ENCODE measurements at regions of chr15 and their contacts with region 1.

Region 1: DNA sequence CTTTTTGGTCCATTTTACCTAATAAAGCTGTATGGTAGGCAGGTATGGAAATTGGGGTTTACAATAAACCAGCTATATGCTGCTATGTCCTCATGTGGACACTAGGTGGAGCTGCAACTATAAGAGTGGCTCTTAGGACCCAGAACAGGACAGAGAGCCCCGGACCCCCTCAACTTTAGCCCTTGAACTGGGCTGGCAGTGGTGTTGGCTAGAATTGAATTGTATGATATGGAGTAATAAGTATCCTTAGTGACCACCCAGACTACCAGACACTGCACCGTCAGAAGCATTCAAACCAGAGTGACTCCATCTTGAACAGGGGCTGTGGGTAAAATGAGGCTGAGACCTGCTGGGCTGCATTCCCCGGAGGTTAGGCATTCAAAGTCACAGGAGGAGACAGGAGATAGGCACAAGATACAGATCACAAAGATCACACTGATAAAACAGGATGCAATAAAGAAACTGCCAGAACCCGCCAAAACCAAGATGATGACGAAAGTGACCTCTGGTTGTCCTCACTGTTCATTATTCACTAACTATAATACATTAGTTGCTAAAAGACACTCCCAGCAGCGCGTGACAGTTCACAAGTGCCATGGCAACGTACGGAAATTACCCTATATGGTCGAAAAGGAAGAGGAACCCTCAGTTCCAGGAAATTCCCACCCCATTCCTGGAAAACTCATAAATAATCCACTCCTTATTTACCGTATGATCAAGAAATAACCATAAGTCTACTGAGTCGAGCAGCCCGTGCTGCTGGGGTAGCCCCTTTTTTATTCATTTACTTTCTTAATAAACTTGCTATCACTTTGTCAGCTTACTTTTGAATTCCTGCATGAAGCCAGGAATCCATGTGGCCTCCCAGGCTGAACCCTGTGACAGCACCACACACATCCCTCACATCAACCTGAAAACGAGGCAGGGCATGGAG is 68.7 kb upstream of the BLM start:
- DNase-seq: peak; percentile 61
- H3K4me3 Mint-ChIP-seq: peak overlapping the region; percentile 42
- H3K27ac Mint-ChIP-seq: peak overlapping the region; percentile 82
- H3K4me1 Mint-ChIP-seq: peaks cover 9% of the 10 kb centered on the region
- H3K27me3 Mint-ChIP-seq: no peaks in the 10 kb centered on the region
- CTCF ChIP-seq: peak; percentile 90

Region 2: DNA sequence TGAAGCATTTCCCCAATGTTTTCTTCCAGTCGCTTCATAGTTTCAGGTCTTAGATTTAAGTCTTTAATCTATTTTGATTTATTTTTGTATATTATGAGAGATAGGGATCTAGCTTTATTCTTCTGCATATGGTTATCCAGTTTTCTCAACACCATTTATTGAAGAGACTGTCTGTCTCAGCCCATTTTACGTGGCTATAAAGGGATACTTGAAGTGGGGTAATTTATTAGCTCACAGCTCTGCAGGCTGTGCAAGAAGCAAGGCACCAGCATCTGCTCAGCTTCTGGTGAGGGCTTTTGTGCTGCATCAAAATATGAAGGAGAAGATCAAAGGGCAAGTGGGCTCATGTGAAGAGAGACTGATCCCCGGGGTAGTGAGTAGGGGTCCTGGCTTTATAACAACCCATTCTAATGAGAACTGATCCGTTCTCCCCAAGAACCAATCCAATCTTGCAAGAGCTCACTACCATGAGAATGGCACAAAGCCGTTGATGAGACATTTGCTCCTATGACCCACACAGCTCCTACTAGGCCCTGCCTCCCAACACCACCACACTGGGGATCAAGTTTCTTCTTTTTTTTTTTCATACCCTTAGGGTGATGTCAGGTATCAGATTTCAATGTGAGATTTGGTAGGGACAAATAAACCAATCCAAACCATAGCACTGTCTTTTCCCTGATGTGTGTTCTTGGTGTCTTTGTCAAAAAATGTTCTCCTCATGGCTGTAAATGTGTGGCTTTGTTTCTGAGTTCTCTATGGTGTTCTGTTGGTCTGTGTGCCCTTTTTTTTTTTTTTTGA is 197.2 kb before region 1 on chr15:
- CTCF ChIA-PET with region 1: no interaction called
- intact Hi-C with region 1: no loop called
- DNase-seq: peak; percentile 4
- H3K4me3 Mint-ChIP-seq: no peak overlapping the region
- H3K27ac Mint-ChIP-seq: no peak overlapping the region
- H3K4me1 Mint-ChIP-seq: peaks cover 13% of the 10 kb centered on the region
- H3K27me3 Mint-ChIP-seq: no peaks in the 10 kb centered on the region
- CTCF ChIP-seq: no peak

Region 3: DNA sequence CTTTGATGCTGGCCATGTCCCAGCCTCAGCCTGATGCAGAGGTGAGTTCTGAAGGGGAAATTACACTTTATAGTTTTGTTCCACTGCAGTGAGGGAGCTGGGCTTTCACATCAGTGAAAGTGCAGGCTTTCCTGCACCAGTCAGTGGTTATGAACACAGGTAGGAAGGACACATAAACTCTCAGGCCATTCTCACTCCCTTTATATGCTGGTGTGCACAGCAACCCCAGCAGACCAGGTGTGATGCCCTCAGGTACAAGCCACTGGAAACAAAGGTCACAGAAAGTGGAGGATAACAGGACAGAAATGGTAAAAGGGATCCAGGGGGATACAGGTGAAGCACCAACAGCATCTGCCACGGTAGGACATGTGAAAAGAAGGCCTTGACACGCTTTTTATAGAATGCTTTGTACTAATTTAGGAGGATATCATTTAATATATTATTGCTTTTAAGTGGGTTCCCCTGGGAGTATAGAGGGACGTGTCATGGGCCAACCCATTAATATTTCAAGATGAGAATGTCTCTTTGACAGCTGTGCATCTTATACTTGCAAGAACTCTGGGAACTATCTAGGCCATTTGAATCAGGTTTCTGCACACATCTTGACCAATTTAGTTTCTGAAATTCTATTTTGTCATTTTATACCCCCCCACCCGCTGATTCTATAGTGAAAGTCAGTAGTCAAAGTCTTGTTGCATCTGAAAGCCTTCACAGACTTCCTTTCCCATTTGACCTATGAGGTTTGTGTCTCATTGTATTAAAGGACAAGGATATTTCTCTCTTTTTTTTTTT is 43.8 kb after region 1 on chr15:
- CTCF ChIA-PET with region 1: interaction called, 4 read pairs
- intact Hi-C with region 1: loop called (anchors 1 kb)
- DNase-seq: no peak
- H3K4me3 Mint-ChIP-seq: no peak overlapping the region
- H3K27ac Mint-ChIP-seq: no peak overlapping the region
- H3K4me1 Mint-ChIP-seq: no peaks in the 10 kb centered on the region
- H3K27me3 Mint-ChIP-seq: no peaks in the 10 kb centered on the region
- CTCF ChIP-seq: no peak

Region 4: GRCh38 chr15:90762109-90762508 is 113.7 kb after region 1 on chr15:
- CTCF ChIA-PET with region 1: no interaction called
- intact Hi-C with region 1: no loop called
- DNase-seq: no peak
- H3K4me3 Mint-ChIP-seq: no peak overlapping the region
- H3K27ac Mint-ChIP-seq: no peak overlapping the region
- H3K4me1 Mint-ChIP-seq: no peaks in the 10 kb centered on the region
- H3K27me3 Mint-ChIP-seq: no peaks in the 10 kb centered on the region
- CTCF ChIP-seq: no peak